ENCODE measurements at regions of chr22 and their contacts with region 1.

Region 1: DNA sequence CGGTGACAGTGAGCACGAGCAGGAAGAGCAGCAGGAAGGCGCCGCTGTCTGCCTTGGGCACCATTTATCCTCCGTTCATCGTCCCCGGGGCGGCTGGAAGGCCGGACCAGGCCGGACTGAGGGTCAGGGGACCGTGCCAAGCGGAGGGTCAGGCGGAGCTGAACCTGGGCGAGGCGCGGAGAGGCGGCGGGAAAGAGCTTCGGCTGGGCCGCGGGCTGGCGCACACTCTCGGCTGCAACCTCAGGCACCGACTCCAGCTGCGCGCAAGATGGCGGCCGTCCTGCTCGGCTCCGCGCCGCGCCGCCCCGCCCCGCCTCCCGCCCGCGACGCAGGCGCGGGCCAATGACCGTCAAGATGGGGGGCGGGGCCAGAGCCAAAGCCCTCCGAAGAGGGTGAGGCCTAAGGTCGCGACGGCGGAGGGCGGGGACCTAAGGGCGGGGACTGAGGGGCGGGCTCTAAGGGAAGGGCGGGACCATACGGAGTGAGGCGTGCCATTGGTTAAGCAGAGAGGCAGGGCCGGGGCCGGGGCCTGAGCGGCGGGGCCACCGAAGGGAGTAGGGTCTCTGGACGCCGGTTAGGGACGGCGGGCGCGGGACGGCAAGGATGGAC is at the start of gene DGCR2:
- DNase-seq: peak; percentile 98
- H3K4me3 Mint-ChIP-seq: peak within 1 kb of the TSS; percentile 88
- H3K27ac Mint-ChIP-seq: peak within 1 kb of the TSS; percentile 58
- H3K4me1 Mint-ChIP-seq: peaks cover 45% of the 10 kb centered on the region
- H3K27me3 Mint-ChIP-seq: no peaks in the 10 kb centered on the region
- total RNA-seq, gene DGCR2: 17.4 to 17.6 TPM

Region 2: DNA sequence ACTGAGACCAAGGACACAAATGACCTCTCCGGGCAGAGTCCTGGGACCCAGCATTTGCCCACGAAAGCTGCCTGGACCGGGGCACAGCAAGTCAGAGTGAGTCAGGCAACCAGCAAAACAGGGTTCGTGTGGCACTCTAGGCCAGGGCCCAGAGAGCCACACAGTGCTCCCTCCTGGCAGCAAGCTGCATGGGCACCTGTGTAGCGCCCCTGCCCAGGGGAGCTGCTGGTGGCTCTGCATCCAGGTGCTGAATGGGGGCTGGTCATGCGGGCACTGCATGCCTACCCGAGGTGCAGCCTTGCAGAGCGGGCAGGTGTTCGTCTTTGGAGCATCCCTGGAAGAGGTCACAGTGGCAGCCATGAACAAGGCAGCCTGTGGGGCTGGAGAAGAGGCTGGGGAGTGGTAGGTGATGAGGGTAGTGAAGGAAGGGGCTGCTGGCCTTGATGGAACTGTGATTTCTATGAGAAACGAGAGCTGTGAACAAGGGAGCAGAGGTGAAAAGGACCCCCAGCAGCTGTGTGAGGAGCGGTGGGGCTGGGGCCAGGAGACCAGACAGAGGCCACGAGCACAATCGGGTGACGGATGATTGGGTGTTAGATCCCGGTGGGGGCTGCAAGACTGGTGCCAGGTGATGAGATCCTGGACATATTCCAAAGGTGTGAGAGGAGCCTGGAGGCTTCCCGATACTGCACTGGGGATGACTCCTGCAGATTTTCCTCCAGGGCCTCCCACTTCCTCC is 63.4 kb before region 1 on chr22:
- CTCF ChIA-PET with region 1: no interaction called
- POLR2A ChIA-PET with region 1: no interaction called
- intact Hi-C with region 1: no loop called
- DNase-seq: peak; percentile 7
- H3K4me3 Mint-ChIP-seq: no peak overlapping the region
- H3K27ac Mint-ChIP-seq: no peak overlapping the region
- H3K4me1 Mint-ChIP-seq: no peaks in the 10 kb centered on the region
- H3K27me3 Mint-ChIP-seq: no peaks in the 10 kb centered on the region

Region 3: DNA sequence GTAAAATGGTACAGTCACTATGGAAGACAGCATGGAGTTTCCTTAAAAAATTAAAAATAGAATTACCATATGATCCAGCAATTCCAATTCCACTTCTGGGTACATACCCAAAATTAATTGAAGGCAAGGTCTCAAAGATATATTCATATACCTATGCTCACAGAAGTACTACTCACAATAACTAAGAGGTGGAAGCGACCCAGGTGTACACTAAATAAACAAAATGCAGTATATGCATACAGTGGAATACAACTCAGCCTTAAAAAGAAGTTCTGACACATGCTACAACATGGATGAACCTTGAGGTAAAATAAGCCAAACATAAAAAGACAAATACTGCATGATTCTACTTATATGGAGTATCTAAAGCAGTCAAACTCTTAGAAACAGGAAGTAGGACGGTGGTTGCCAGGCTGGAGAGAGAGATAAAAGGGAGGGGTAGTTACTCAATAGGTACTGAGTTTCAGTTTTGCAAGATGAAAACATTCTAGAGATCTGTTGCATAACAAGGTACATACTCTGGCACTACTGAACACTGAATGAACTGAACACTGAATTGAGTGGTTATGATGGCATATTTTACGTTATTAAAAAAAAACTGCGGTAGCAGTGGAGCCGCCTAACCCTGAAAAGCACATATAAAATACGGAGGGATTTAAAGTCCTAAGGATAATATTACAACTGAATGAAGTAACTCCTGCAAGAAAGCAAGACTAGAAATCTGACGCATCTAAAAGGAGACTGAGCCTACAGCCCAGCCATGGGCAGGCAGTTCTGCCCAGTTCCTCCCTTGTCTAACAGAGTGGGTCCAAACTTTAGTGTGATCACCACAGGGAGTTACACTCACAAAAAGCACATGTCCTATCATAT is 12.8 kb before region 1 on chr22:
- CTCF ChIA-PET with region 1: interaction called, 7 read pairs
- POLR2A ChIA-PET with region 1: interaction called, 5 read pairs
- intact Hi-C with region 1: loop called (anchors 1 kb)
- DNase-seq: peak; percentile 67
- H3K4me3 Mint-ChIP-seq: peak overlapping the region; percentile 34
- H3K27ac Mint-ChIP-seq: peak overlapping the region; percentile 85
- H3K4me1 Mint-ChIP-seq: peaks cover 63% of the 10 kb centered on the region
- H3K27me3 Mint-ChIP-seq: no peaks in the 10 kb centered on the region

Region 4: DNA sequence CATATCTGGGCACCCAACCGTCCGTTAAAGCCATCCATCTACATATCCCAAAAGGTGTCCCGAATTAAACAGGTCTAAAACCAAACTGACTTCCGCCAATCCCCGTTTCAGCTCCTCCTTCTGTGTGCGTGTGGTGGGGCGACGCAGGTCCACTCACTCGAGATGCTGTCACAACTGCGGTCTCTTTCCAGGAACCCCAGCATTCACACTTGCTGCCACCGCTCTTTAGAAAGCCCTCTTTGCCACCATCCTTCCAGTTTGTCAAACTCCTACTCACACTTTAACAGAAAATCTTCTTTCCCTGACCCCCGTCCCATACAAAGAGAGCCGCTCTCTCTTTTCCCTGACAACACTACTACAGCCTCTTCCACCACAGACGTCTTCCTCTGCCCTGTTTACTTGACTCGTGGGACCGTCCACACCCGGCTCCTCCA is 21.7 kb after region 1 on chr22:
- CTCF ChIA-PET with region 1: interaction called, 9 read pairs
- POLR2A ChIA-PET with region 1: interaction called, 4 read pairs
- intact Hi-C with region 1: loop called (anchors 1 kb)
- DNase-seq: peak; percentile 64
- H3K4me3 Mint-ChIP-seq: peak overlapping the region; percentile 99
- H3K27ac Mint-ChIP-seq: peak overlapping the region; percentile 91
- H3K4me1 Mint-ChIP-seq: peaks cover 17% of the 10 kb centered on the region
- H3K27me3 Mint-ChIP-seq: peaks cover 6% of the 10 kb centered on the region

Region 5: DNA sequence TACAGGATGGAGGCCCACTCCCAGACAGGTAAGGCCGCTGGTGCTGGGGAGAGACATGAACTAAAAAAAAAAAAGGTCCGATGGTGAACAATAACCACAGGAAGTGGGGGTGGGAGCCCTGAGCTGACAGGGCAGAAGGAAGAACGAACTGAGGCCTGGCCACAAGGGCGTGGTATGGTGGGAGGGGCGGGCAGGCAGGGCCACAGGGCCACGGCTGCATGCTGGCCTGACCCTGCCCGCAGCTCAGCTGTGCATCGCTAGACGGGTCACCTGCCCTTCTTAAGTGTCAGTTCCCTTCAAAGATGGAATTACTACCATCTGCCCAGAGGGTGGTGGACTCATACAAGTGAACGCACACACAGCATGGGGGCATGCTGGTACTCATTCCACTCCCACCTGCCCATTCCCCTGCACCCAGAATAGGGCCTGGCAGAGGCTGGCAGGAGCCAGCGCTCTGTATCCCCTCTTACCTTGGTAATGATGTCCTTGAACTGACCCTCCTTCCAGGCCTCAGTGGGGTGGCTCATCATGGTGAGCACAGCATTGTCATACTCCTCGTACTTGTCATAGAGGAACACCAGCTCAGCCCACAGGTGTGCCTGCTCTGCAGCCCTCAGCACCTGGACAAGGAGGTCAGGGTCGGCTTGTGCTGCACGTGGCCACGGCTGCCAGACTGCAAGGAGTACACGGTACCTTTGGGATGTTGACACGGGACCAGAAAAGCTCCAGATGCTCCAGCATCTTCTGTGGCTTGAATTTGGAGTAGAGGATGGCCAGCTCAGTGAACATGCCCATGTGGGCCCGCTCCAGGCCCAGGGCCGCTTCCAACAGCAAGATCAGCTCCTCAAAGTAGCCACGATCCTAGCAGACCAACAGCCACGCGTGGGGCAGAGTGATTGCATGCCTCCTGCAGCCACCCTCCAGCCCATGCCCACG is 73.8 kb after region 1 on chr22:
- CTCF ChIA-PET with region 1: no interaction called
- POLR2A ChIA-PET with region 1: no interaction called
- intact Hi-C with region 1: no loop called
- DNase-seq: no peak
- H3K4me3 Mint-ChIP-seq: no peak overlapping the region
- H3K27ac Mint-ChIP-seq: no peak overlapping the region
- H3K4me1 Mint-ChIP-seq: peaks cover 7% of the 10 kb centered on the region
- H3K27me3 Mint-ChIP-seq: no peaks in the 10 kb centered on the region